ENCODE measurements at regions of chr4 and their contacts with region 1.

Region 1: GRCh38 chr4:140153718-140154571 is at the start of gene MAML3:
- DNase-seq: peak; percentile 94
- H3K4me3 Mint-ChIP-seq: peak within 1 kb of the TSS; percentile 95
- H3K27ac Mint-ChIP-seq: peak within 1 kb of the TSS; percentile 86
- H3K4me1 Mint-ChIP-seq: no peaks in the 10 kb centered on the region
- H3K27me3 Mint-ChIP-seq: no peaks in the 10 kb centered on the region
- CTCF ChIP-seq: no peak
- total RNA-seq, gene MAML3: 0.89 and 1.7 TPM in 2 replicates

Region 2: GRCh38 chr4:139656614-139657486 is 497.1 kb before region 1 on chr4:
- CTCF ChIA-PET with region 1: interaction called, 6 read pairs
- POLR2A ChIA-PET with region 1: interaction called, 19 read pairs
- intact Hi-C with region 1: loop called (anchors 1 kb)
- DNase-seq: peak; percentile 83
- H3K4me3 Mint-ChIP-seq: peak overlapping the region; percentile 64
- H3K27ac Mint-ChIP-seq: peak overlapping the region; percentile 85
- H3K4me1 Mint-ChIP-seq: peaks cover 25% of the 10 kb centered on the region
- H3K27me3 Mint-ChIP-seq: no peaks in the 10 kb centered on the region
- CTCF ChIP-seq: peak; percentile 63

Region 3: GRCh38 chr4:139872274-139872673 is 281.7 kb before region 1 on chr4:
- CTCF ChIA-PET with region 1: no interaction called
- POLR2A ChIA-PET with region 1: interaction called, 7 read pairs
- intact Hi-C with region 1: loop called (anchors 1 kb)
- DNase-seq: peak; percentile 90
- H3K4me3 Mint-ChIP-seq: no peak overlapping the region
- H3K27ac Mint-ChIP-seq: peak overlapping the region; percentile 9
- H3K4me1 Mint-ChIP-seq: peaks cover 8% of the 10 kb centered on the region
- H3K27me3 Mint-ChIP-seq: no peaks in the 10 kb centered on the region
- CTCF ChIP-seq: no peak

Region 4: GRCh38 chr4:140052050-140052449 is 101.9 kb before region 1 on chr4:
- CTCF ChIA-PET with region 1: interaction called, 7 read pairs
- POLR2A ChIA-PET with region 1: interaction called, 5 read pairs
- intact Hi-C with region 1: loop called (anchors 1 kb)
- DNase-seq: peak; percentile 47
- H3K4me3 Mint-ChIP-seq: no peak overlapping the region
- H3K27ac Mint-ChIP-seq: no peak overlapping the region
- H3K4me1 Mint-ChIP-seq: peaks cover 13% of the 10 kb centered on the region
- H3K27me3 Mint-ChIP-seq: no peaks in the 10 kb centered on the region
- CTCF ChIP-seq: peak; percentile 57

Region 5: DNA sequence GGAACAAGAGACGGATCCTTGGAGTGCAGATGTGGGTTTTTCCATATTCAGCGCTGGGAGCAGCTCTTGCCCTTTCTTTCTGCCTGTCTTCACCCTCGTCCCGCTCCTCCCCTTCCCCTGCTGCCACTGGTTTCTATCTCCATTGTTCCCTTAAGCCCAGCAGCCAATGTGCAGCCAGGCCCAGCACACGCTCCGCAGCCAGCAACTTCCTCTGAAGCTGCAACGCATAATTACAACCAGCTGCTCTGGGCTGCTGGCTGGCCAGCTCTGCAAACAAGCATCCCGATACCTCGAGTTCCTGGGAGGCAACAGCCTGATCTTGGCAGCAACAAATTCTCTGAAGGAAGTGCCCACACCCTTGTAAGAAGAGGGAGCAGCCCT is 83.7 kb after region 1 on chr4:
- CTCF ChIA-PET with region 1: interaction called, 8 read pairs
- POLR2A ChIA-PET with region 1: interaction called, 13 read pairs
- intact Hi-C with region 1: no loop called
- DNase-seq: peak; percentile 46
- H3K4me3 Mint-ChIP-seq: peak overlapping the region; percentile 35
- H3K27ac Mint-ChIP-seq: peak overlapping the region; percentile 24
- H3K4me1 Mint-ChIP-seq: peaks cover 23% of the 10 kb centered on the region
- H3K27me3 Mint-ChIP-seq: no peaks in the 10 kb centered on the region
- CTCF ChIP-seq: no peak

Region 6: GRCh38 chr4:140373328-140374129 is 219.6 kb after region 1 on chr4 and contains the start of gene SCOC:
- CTCF ChIA-PET with region 1: no interaction called
- POLR2A ChIA-PET with region 1: interaction called, 11 read pairs
- intact Hi-C with region 1: no loop called
- DNase-seq: peak; percentile 100
- H3K4me3 Mint-ChIP-seq: no peak within 1 kb of the TSS
- H3K27ac Mint-ChIP-seq: no peak within 1 kb of the TSS
- H3K4me1 Mint-ChIP-seq: peaks cover 34% of the 10 kb centered on the region
- H3K27me3 Mint-ChIP-seq: no peaks in the 10 kb centered on the region
- CTCF ChIP-seq: no peak
- total RNA-seq, gene SCOC: 49.2 and 57.5 TPM in 2 replicates

Measured in MCF 10A (cell line).